ENCODE measurements at regions of chr16 and their contacts with region 1.

Region 1: GRCh38 chr16:52372313-52372712 is 174.6 kb downstream of the TOX3 start:
- DNase-seq: no peak
- H3K4me3 Mint-ChIP-seq: no peak overlapping the region
- H3K27ac Mint-ChIP-seq: no peak overlapping the region
- H3K4me1 Mint-ChIP-seq: no peaks in the 10 kb centered on the region
- H3K27me3 Mint-ChIP-seq: no peaks in the 10 kb centered on the region

Region 2: GRCh38 chr16:52439171-52439701 is 66.9 kb after region 1 on chr16:
- CTCF ChIA-PET with region 1: no interaction called
- POLR2A ChIA-PET with region 1: no interaction called
- intact Hi-C with region 1: loop called (anchors 10 kb)
- DNase-seq: no peak
- H3K4me3 Mint-ChIP-seq: no peak overlapping the region
- H3K27ac Mint-ChIP-seq: no peak overlapping the region
- H3K4me1 Mint-ChIP-seq: no peaks in the 10 kb centered on the region
- H3K27me3 Mint-ChIP-seq: no peaks in the 10 kb centered on the region